PC-3 (cell line): ENCODE measurements at regions of chr4 and their contacts with region 1.

Region 1: GRCh38 chr4:174222266-174222872 is 61.1 kb downstream of the FBXO8 start:
- DNase-seq: peak; percentile 63
- ATAC-seq: peak; percentile 46; the same call in 1 of the 2 replicates
- H3K4me3 ChIP-seq: no peak overlapping the region
- H3K27ac ChIP-seq: no peak overlapping the region
- H3K4me1 ChIP-seq: no peaks in the 10 kb centered on the region
- H3K27me3 ChIP-seq: no peaks in the 10 kb centered on the region
- CTCF ChIP-seq: peak; percentile 76

Region 2: DNA sequence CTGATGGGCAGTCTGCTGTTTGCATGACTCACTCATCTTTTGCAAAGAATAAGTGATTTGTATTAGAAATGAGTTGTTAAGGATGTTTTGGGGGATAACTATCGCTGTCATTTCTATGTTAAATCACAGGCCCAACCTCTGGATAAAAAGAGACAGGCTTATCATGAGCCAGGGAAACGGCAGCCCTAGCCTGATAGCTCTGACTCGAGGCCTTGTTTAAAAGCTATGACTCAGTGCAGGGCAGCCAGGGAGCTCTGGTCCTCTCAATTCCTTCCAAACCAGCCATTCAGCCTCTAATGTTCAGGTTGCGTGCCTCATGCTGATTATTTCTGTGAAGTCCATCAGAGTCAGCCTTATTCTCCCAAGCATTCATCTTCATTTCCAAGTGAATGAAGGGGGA is 386.5 kb before region 1 on chr4:
- CTCF ChIA-PET with region 1: no interaction called
- POLR2A ChIA-PET with region 1: no interaction called
- intact Hi-C with region 1: no loop called
- DNase-seq: peak; percentile 23
- ATAC-seq: no peak
- H3K4me3 ChIP-seq: no peak overlapping the region
- H3K27ac ChIP-seq: no peak overlapping the region
- H3K4me1 ChIP-seq: no peaks in the 10 kb centered on the region
- H3K27me3 ChIP-seq: peaks cover 5% of the 10 kb centered on the region; the same call in 1 of the 2 replicates
- CTCF ChIP-seq: no peak

Region 3: DNA sequence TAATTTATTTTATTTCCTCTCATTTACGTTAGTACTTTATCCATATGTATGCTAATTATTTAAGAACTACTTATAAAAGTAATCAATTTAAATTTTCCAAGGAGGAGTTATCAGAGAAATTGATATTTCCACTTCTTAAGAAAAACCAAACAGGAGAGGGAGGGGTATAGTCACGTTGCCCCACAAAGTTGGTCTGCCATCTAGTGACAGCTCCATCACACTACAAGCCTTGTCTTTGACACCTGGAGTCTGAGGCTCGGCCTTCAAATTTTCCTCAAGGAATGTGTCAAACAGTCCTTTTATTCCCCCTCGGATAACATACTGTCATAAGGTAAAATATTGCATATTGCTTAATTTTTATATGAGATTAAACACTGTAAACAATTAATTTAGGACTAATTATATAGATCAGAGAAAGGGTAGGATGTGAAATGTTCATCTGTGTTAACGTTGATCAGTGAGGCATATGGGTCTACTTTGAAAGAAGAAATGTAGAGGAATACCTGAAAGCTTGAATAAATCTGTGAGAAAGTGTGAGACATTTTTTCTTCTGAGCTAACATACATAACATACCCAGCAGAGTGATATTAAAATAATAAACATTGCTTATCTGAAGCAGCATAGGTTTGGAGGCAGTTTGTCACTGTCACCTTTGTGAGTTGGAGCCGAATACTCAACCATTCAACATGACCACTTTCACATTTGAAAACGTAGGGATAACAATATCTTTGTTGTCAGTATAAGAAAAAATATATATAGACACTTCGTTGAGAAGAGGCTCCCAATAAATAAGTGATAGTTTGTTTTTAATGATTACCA is 492.2 kb after region 1 on chr4:
- CTCF ChIA-PET with region 1: no interaction called
- POLR2A ChIA-PET with region 1: no interaction called
- intact Hi-C with region 1: loop called (anchors 10 kb)
- DNase-seq: peak; percentile 68
- ATAC-seq: peak; percentile 60; the same call in 1 of the 2 replicates
- H3K4me3 ChIP-seq: no peak overlapping the region
- H3K27ac ChIP-seq: no peak overlapping the region
- H3K4me1 ChIP-seq: peaks cover 16% of the 10 kb centered on the region
- H3K27me3 ChIP-seq: no peaks in the 10 kb centered on the region
- CTCF ChIP-seq: peak; percentile 79